Caco-2 (cell line): ENCODE measurements at regions of chr18 and their contacts with region 1.

Region 1: GRCh38 chr18:50401888-50402287 is 27.0 kb downstream of the SKA1 start:
- DNase-seq: no peak
- H3K4me3 ChIP-seq: no peak overlapping the region; the same call in 1 of the 2 replicates
- H3K4me3 Mint-ChIP-seq: no peak overlapping the region
- H3K27ac Mint-ChIP-seq: no peak overlapping the region
- H3K4me1 ChIP-seq: peaks cover 28% of the 10 kb centered on the region
- H3K4me1 Mint-ChIP-seq: peaks cover 36% of the 10 kb centered on the region
- H3K27me3 ChIP-seq: no peaks in the 10 kb centered on the region
- H3K27me3 Mint-ChIP-seq: no peaks in the 10 kb centered on the region
- CTCF ChIP-seq: no peak

Region 2: GRCh38 chr18:50356036-50356945 is 45.6 kb before region 1 on chr18:
- CTCF ChIA-PET with region 1: no interaction called
- POLR2A ChIA-PET with region 1: no interaction called
- intact Hi-C with region 1: no loop called
- DNase-seq: no peak
- H3K4me3 ChIP-seq: no peak overlapping the region
- H3K4me3 Mint-ChIP-seq: no peak overlapping the region
- H3K27ac Mint-ChIP-seq: no peak overlapping the region
- H3K4me1 ChIP-seq: no peaks in the 10 kb centered on the region
- H3K4me1 Mint-ChIP-seq: no peaks in the 10 kb centered on the region
- H3K27me3 ChIP-seq: no peaks in the 10 kb centered on the region
- H3K27me3 Mint-ChIP-seq: no peaks in the 10 kb centered on the region
- CTCF ChIP-seq: no peak

Region 3: DNA sequence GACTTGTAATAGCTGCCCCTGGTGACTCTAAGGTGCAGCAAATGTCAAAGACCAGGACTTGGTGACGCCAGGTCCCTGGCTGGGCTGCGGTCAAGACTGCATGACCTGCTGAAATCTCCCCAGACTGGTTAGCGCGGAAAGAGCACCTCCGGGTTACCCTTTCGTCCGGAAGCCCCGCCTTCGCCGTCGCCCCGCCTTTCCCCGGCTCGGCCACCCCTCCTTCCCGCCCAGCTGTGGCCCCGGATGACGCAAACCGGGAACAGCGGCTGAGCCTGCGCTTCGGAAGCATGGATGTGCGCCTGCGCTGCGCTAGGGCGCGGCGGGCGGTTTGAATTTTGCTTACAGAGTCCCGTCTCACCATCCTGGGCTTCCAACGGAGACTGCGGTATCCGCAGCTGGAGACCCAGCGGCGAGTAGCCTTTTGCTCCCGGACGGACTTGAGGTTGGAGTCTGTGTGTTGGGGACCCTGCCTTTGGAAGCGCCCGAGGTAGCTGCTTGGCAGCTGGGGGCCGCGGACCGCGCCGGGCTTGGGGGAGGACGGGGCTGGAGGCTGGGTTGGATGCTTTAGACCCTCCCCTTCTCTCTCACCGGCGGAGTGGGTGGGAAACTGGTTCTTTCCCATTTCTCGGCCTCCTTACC is 27.0 kb before region 1 on chr18 and contains the start of gene SKA1:
- CTCF ChIA-PET with region 1: no interaction called
- POLR2A ChIA-PET with region 1: no interaction called
- intact Hi-C with region 1: loop called (anchors 1 kb)
- DNase-seq: peak; percentile 88
- H3K4me3 ChIP-seq: peak within 1 kb of the TSS; percentile 59
- H3K4me3 Mint-ChIP-seq: peak within 1 kb of the TSS; percentile 74
- H3K27ac Mint-ChIP-seq: peak within 1 kb of the TSS; percentile 84
- H3K4me1 ChIP-seq: peaks cover 4% of the 10 kb centered on the region
- H3K4me1 Mint-ChIP-seq: no peaks in the 10 kb centered on the region
- H3K27me3 ChIP-seq: no peaks in the 10 kb centered on the region
- H3K27me3 Mint-ChIP-seq: no peaks in the 10 kb centered on the region
- CTCF ChIP-seq: no peak
- total RNA-seq, gene SKA1: 31.3 and 32.4 TPM in 2 replicates